CD4-positive, alpha-beta T cell (primary cell): ENCODE measurements at regions of chr18 and their contacts with region 1.

Region 1: DNA sequence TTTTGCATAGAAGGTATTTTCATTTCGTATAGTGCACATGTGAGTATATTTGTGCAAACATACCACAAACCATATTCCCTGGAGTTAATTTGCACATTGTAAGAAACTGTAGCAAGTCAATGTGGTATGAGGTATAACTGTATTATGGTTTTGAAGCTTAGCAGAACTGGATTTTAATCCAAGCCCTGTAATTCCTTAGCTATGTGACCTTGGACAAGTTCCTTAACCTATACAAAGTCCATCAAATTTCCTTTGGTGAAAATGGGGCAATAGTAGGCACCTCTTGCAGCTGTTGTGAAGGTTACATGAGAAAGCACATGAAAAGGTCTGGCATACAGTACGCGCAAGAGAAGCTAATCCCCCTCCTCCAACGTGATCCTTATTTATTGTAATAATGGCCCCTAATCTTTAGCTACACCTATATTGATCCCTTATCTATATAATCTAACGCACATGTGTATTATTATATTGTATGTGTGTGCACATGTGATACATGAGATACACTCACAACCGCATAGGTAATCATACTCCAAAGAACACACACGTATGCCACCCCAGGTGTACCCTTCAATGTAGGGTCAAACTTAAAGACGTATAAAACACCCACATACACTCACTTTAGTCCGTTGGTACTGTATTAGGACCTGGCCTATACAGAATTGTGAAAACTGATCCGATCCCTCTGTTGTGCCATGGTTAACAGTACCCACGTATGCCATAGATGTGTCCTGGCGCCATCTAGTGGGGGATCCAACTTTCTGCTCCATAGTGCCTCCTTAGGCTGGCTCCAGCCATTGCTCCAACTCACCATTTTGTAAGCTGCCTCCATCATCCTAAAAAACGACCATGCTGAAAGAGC is 402.9 kb upstream of the SLC14A2 start:
- DNase-seq: peak; percentile 27 to 80 (median 44)
- ATAC-seq: peak; percentile 65
- H3K4me3 ChIP-seq: no peak overlapping the region
- H3K4me3 Mint-ChIP-seq: no peak overlapping the region
- H3K27ac ChIP-seq: no peak overlapping the region
- H3K27ac Mint-ChIP-seq: no peak overlapping the region
- H3K4me1 ChIP-seq: no peaks in the 10 kb centered on the region
- H3K4me1 Mint-ChIP-seq: no peaks in the 10 kb centered on the region
- H3K27me3 ChIP-seq: no peaks in the 10 kb centered on the region
- H3K27me3 Mint-ChIP-seq: peaks cover 5% of the 10 kb centered on the region
- CTCF ChIP-seq: peak; percentile 69

Region 2: GRCh38 chr18:43620936-43621335 is 1591.5 kb before region 1 on chr18:
- CTCF ChIA-PET with region 1: no interaction called
- POLR2A ChIA-PET with region 1: no interaction called
- intact Hi-C with region 1: loop called in 1 of 2 experiments (anchors 5 kb)
- DNase-seq: peak in 3 of 14 experiments; percentile 8 to 9 (median 9)
- ATAC-seq: no peak
- H3K4me3 ChIP-seq: no peak overlapping the region
- H3K4me3 Mint-ChIP-seq: no peak overlapping the region
- H3K27ac ChIP-seq: no peak overlapping the region
- H3K27ac Mint-ChIP-seq: no peak overlapping the region
- H3K4me1 ChIP-seq: no peaks in the 10 kb centered on the region
- H3K4me1 Mint-ChIP-seq: no peaks in the 10 kb centered on the region
- H3K27me3 ChIP-seq: no peaks in the 10 kb centered on the region
- H3K27me3 Mint-ChIP-seq: no peaks in the 10 kb centered on the region
- CTCF ChIP-seq: no peak

Region 3: GRCh38 chr18:44679056-44679905 is 533.1 kb before region 1 on chr18:
- CTCF ChIA-PET with region 1: no interaction called
- POLR2A ChIA-PET with region 1: no interaction called
- intact Hi-C with region 1: loop called in 1 of 2 experiments (anchors 5 kb)
- DNase-seq: peak; percentile 18 to 82 (median 44)
- ATAC-seq: peak; percentile 86
- H3K4me3 ChIP-seq: peak overlapping the region; percentile 57
- H3K4me3 Mint-ChIP-seq: peak overlapping the region; percentile 80
- H3K27ac ChIP-seq: no peak overlapping the region
- H3K27ac Mint-ChIP-seq: no peak overlapping the region
- H3K4me1 ChIP-seq: peaks cover 12% of the 10 kb centered on the region
- H3K4me1 Mint-ChIP-seq: no peaks in the 10 kb centered on the region
- H3K27me3 ChIP-seq: peaks cover 17 to 37% of the 10 kb centered on the region in 2 experiments
- H3K27me3 Mint-ChIP-seq: peaks cover 38% of the 10 kb centered on the region
- CTCF ChIP-seq: no peak

Region 4: DNA sequence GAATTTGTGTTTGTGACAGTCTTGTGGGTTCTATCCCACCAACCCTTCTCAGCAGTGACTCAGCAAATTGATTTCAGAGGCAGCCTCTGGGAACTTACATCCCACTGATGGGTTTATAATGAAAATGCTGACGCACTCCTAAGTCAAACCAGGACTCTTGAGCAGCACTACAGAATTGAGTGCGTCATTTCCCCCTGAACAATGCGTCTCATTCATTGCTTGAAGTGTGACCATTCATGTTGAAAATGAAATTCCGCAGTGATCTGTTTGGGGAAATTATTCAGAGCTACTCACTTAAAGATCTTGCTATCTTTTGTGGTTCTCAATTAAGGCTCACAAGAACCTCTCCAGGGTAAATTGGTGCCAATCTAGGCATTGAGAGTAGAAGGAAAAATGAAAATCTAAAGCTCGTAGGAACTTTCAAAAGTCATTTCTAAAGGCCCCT is 14.9 kb before region 1 on chr18:
- CTCF ChIA-PET with region 1: no interaction called
- POLR2A ChIA-PET with region 1: no interaction called
- intact Hi-C with region 1: no loop called
- DNase-seq: no peak
- ATAC-seq: no peak
- H3K4me3 ChIP-seq: no peak overlapping the region
- H3K4me3 Mint-ChIP-seq: no peak overlapping the region
- H3K27ac ChIP-seq: no peak overlapping the region
- H3K27ac Mint-ChIP-seq: no peak overlapping the region
- H3K4me1 ChIP-seq: no peaks in the 10 kb centered on the region
- H3K4me1 Mint-ChIP-seq: no peaks in the 10 kb centered on the region
- H3K27me3 ChIP-seq: no peaks in the 10 kb centered on the region
- H3K27me3 Mint-ChIP-seq: no peaks in the 10 kb centered on the region
- CTCF ChIP-seq: no peak